ENCODE measurements at regions of chr22 and their contacts with region 1.

Region 1: DNA sequence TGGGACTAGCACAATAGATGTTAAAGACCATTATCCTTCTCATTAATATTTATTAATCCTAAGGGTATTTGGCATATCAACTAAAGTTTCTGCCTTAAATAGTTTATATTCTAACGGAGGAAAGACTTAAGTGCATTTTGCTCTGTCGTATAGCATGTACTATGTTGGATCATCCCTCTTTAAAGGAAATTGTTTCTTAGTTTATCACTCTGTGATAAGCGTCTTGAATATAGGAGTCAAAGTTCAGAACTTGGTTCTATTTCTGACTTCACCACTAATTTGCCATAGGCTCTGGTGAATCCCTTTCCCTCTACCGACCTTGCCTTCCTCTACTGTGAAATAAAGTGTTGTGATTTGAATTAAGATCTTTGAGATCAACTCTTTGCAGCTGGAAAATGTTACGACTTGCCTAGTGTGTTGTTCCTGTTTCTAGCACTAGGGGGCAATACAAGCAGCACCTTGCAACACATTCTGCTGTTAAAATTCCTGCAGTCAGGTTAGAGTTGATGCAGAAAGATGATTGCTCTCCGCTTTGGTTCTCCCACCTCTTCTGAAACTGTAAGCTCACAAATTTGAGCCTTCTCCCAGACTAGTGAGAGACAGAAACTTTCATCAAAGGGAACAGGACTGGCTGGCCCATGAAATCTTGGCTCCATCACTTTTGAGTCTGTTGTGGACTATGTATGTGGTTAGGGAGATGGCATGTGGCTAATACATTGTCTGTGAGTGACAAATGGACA is 27.8 kb upstream of the ZNRF3 start:
- DNase-seq: peak; percentile 43
- H3K4me3 ChIP-seq: no peak overlapping the region
- H3K27ac ChIP-seq: no peak overlapping the region
- H3K4me1 ChIP-seq: peaks cover 0 to 9% (median 2%) of the 10 kb centered on the region in 4 donors
- H3K27me3 ChIP-seq: no peaks in the 10 kb centered on the region
- CTCF ChIP-seq: peak; percentile 87 to 96 (median 93)
- EP300 ChIP-seq: no peak
- POLR2A ChIP-seq: no peak

Region 2: GRCh38 chr22:29093501-29094300 is 238.2 kb after region 1 on chr22:
- in situ Hi-C with region 1: no loop called
- intact Hi-C with region 1: no loop called
- DNase-seq: no peak
- H3K4me3 ChIP-seq: no peak overlapping the region
- H3K27ac ChIP-seq: peak overlapping the region; percentile 11 to 52 (median 38)
- H3K4me1 ChIP-seq: peaks cover 0 to 19% (median 10%) of the 10 kb centered on the region in 4 donors
- H3K27me3 ChIP-seq: no peaks in the 10 kb centered on the region
- CTCF ChIP-seq: no peak
- EP300 ChIP-seq: no peak
- POLR2A ChIP-seq: no peak

Region 3: DNA sequence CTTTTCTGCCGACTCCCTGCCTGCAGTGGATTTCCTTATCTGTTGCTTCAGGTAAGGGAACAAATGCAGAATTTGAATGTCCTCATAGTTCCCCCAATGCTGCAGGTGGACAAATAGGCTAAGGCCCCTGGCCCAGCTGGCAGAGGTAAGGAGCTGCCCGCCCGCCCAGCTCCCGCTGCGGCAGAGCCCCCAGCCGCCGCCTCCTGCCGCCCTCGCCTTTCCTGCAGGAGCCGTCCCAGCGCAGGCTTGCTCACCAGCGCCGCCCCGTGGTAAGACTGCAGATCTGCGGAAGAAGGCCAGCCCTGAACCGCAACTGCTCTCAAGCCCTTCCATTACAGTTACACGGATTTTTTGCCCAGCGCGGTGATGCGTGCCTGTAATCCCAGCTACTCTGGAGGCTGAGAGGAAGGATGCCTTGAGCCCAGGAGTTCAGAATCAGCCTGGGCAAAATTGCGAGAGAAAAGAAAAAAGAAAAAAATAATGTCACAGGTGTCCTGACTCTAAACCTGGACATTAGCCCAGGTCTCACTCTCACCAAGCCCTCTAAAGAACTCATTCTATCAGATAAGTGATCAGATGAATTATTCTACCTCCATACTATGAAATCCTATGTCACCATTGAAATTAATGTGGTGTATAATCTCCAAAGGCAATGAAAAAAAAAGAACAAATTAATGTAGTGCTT is 299.0 kb after region 1 on chr22:
- in situ Hi-C with region 1: loop called in 2 of 4 experiments (anchors 10 to 25 kb)
- intact Hi-C with region 1: no loop called
- DNase-seq: peak; percentile 76
- H3K4me3 ChIP-seq: peak overlapping the region in 1 of 4 donors; percentile 26
- H3K27ac ChIP-seq: peak overlapping the region in 2 of 4 donors; percentile 19 to 78
- H3K4me1 ChIP-seq: peaks cover 0 to 46% (median 11%) of the 10 kb centered on the region in 4 donors
- H3K27me3 ChIP-seq: no peaks in the 10 kb centered on the region
- CTCF ChIP-seq: peak; percentile 88 to 94 (median 93)
- EP300 ChIP-seq: no peak
- POLR2A ChIP-seq: no peak

Region 4: DNA sequence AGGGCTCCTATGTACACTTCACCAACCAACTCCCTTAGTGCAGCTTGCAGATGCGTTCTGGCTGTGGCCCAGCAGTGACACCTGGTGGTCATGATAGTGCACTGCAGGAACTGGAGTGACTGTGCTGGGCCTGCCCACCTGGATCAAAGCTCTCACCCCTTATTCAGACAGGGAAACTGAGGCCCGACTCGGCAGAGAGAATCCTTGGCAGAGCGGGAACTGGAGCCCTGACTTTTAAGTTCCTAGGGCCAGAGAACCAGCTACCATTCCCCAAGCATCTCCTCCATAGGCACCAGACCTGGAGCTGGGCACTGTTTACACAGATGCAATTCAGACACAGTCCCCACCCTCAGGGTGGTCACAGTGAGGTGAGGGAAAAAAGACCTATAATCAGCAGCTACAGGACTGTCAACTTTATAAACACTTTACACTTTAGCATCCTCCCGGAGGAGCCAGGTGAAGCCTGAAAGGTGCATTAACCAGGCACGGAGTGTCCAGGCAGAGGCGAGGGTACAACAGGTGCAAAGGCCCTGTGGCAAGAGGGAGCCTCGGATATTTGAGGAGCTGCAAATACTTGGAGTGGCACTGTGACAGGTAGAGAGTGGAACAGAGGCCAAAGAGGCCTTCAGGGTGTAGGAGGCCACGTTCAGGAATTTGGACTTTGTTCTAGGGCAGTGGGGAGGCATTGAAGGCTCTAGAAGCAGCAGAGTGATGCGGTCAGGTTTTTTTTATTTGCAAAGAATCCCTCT is 390.3 kb after region 1 on chr22:
- in situ Hi-C with region 1: loop called in 2 of 4 experiments (anchors 25 kb)
- intact Hi-C with region 1: no loop called
- DNase-seq: peak; percentile 75
- H3K4me3 ChIP-seq: no peak overlapping the region
- H3K27ac ChIP-seq: no peak overlapping the region
- H3K4me1 ChIP-seq: no peaks in the 10 kb centered on the region
- H3K27me3 ChIP-seq: no peaks in the 10 kb centered on the region
- CTCF ChIP-seq: peak; percentile 87 to 99 (median 97)
- EP300 ChIP-seq: no peak
- POLR2A ChIP-seq: no peak

Measured in transverse colon (tissue), 4 donors.